Dorsolateral prefrontal cortex (tissue), 120 donors: ENCODE measurements at regions of chr9 and their contacts with region 1.

Region 1: DNA sequence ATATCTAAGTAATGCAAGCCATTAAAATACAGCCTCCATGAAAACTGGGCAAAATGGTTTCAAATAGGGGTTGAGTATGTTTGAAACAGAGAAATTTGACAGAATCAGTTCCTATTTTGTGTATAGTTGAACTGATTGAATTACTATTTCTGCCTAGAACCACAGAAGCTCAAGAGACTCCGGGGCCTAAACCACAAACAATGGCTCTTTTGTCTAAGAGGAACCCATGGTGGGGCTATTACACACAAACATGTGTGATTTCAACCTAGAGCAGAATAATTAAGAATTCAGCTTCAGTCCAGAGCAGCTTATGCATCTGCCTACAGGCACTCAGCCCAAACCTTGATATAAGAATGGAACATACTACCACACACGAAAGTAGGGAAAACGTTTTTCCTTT is 171.2 kb upstream of the MPDZ start:
- DNase-seq: no peak
- H3K4me3 ChIP-seq: peak overlapping the region in 2 of 59 donors; percentile 11 to 32
- H3K27ac ChIP-seq: peak overlapping the region in 51 of 59 donors; percentile 6 to 87 (median 68)
- H3K27me3 ChIP-seq: no peaks in the 10 kb centered on the region
- CTCF ChIP-seq: peak in 3 of 56 donors; percentile 17 to 26 (median 21)

Region 2: GRCh38 chr9:13513716-13514444 is 63.2 kb after region 1 on chr9:
- intact Hi-C with region 1: no loop called
- DNase-seq: no peak
- H3K4me3 ChIP-seq: no peak overlapping the region
- H3K27ac ChIP-seq: peak overlapping the region in 1 of 59 donors; percentile 15
- H3K27me3 ChIP-seq: peaks cover 0 to 3% (median 0%) of the 10 kb centered on the region in 45 donors
- CTCF ChIP-seq: no peak

Region 3: DNA sequence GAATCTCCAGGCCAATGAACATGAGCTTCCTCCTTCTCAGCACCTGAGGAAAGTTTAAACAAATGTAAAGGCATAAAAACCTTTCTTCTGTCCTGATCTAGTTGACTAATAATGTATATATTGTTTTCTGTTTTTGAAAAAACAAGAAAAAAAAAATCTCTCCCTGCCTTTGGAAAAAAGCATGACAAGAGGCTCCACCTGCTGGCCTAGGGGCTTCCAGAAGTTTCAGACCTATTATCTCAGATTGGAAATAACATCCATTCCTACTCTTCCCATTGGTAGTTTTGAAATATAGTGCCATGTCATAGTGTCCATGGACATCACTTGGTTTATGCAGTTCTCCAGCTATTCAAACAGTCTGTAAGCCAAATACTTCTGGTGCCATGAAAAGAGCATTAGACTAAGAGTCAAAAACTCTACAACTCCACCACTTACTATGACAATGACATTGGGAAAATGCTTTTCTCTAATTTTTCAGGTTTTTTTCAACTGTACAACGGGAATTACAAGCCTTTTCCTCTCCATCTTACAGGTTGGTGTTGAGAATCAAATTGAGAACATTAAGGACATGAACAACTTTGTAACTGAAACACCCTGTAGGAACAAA is 238.4 kb after region 1 on chr9:
- intact Hi-C with region 1: loop called (anchors 5 to 10 kb)
- DNase-seq: peak in 4 of 10 donors; percentile 11 to 44 (median 28)
- H3K4me3 ChIP-seq: no peak overlapping the region
- H3K27ac ChIP-seq: peak overlapping the region in 16 of 59 donors; percentile 10 to 72 (median 45)
- H3K27me3 ChIP-seq: no peaks in the 10 kb centered on the region
- CTCF ChIP-seq: peak in 55 of 56 donors; percentile 11 to 79 (median 57)